Thyroid gland (tissue), 4 donors: ENCODE measurements at regions of chr10 and their contacts with region 1.

Region 1: DNA sequence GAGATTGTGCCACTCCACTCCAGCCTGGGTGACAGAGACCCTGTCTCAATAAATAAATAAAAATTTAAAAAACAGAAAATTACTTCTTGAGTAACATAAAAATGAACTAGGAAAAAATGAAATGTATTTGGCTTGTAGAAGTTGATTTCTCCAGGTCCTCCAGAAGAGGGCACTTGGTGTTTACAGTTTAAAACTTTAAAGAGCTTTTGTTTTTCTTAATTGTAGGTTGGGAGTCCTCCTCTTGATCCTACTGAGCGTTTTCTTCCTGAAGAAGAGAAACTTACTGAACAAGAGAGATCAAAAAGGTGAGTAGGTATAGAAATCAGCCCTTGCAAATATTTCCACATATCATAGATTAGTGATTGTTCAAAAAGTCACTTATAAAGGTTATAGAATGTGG is 16.2 kb downstream of the KIFBP start:
- DNase-seq: no peak
- H3K4me3 ChIP-seq: no peak overlapping the region
- H3K27ac ChIP-seq: no peak overlapping the region
- H3K4me1 ChIP-seq: no peaks in the 10 kb centered on the region
- H3K27me3 ChIP-seq: no peaks in the 10 kb centered on the region
- CTCF ChIP-seq: peak in 3 of 6 experiments; percentile 8 to 22 (median 14)
- POLR2A ChIP-seq: no peak

Region 2: GRCh38 chr10:69092959-69093850 is 88.4 kb after region 1 on chr10:
- intact Hi-C with region 1: loop called (anchors 5 kb)
- DNase-seq: peak; percentile 78 to 79
- H3K4me3 ChIP-seq: no peak overlapping the region
- H3K27ac ChIP-seq: no peak overlapping the region
- H3K4me1 ChIP-seq: no peaks in the 10 kb centered on the region
- H3K27me3 ChIP-seq: no peaks in the 10 kb centered on the region
- CTCF ChIP-seq: peak; percentile 56 to 79 (median 69)
- POLR2A ChIP-seq: no peak

Region 3: GRCh38 chr10:69716711-69717560 is 712.1 kb after region 1 on chr10:
- intact Hi-C with region 1: no loop called
- DNase-seq: peak; percentile 69 to 71
- H3K4me3 ChIP-seq: no peak overlapping the region
- H3K27ac ChIP-seq: no peak overlapping the region
- H3K4me1 ChIP-seq: no peaks in the 10 kb centered on the region
- H3K27me3 ChIP-seq: no peaks in the 10 kb centered on the region
- CTCF ChIP-seq: peak; percentile 41 to 84 (median 66)
- POLR2A ChIP-seq: no peak